Activated CD4-positive, alpha-beta T cell treated with anti-CD3 and anti-CD28 coated beads for 36 hours (primary cell): ENCODE measurements at regions of chr19 and their contacts with region 1.

Region 1: GRCh38 chr19:44770550-44771257 is 7.0 kb upstream of the CBLC start:
- DNase-seq: peak; percentile 99
- ATAC-seq: peak; percentile 100
- H3K4me3 Mint-ChIP-seq: peak overlapping the region; percentile 47
- H3K27ac Mint-ChIP-seq: peak overlapping the region; percentile 77
- H3K4me1 Mint-ChIP-seq: peaks cover 30% of the 10 kb centered on the region
- H3K27me3 Mint-ChIP-seq: no peaks in the 10 kb centered on the region

Region 2: DNA sequence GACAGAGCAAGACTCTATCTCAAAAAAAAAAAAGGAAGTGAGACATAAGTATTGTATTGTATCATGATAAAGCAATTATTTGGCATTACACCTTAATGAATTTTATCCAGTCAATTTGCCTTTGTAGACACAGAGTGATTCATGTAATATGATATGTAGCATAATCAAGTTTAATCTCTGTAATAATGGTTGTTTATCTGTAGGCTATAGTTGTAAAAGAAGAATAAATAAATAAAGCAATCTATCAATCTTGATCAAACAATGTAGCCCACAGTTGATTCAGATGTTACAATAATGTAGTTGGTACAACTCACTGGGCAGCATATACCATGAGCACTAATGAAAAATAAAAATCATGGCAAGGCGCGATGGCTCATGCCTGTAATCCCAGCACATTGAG is 212.8 kb before region 1 on chr19:
- CTCF ChIA-PET with region 1: no interaction called
- POLR2A ChIA-PET with region 1: no interaction called
- intact Hi-C with region 1: no loop called
- DNase-seq: no peak
- ATAC-seq: no peak
- H3K4me3 Mint-ChIP-seq: no peak overlapping the region
- H3K27ac Mint-ChIP-seq: no peak overlapping the region
- H3K4me1 Mint-ChIP-seq: no peaks in the 10 kb centered on the region
- H3K27me3 Mint-ChIP-seq: peaks cover 6% of the 10 kb centered on the region

Region 3: GRCh38 chr19:44653977-44654774 is 116.5 kb before region 1 on chr19:
- CTCF ChIA-PET with region 1: interaction called, 10 read pairs
- POLR2A ChIA-PET with region 1: no interaction called
- intact Hi-C with region 1: loop called in 1 of 2 experiments (anchors 1 kb)
- DNase-seq: peak; percentile 89
- ATAC-seq: peak; percentile 97
- H3K4me3 Mint-ChIP-seq: no peak overlapping the region
- H3K27ac Mint-ChIP-seq: no peak overlapping the region
- H3K4me1 Mint-ChIP-seq: peaks cover 11% of the 10 kb centered on the region
- H3K27me3 Mint-ChIP-seq: no peaks in the 10 kb centered on the region

Region 4: GRCh38 chr19:44718441-44719261 is 52.1 kb before region 1 on chr19:
- CTCF ChIA-PET with region 1: interaction called, 288 read pairs
- POLR2A ChIA-PET with region 1: interaction called, 20 read pairs
- intact Hi-C with region 1: no loop called
- DNase-seq: no peak
- ATAC-seq: no peak
- H3K4me3 Mint-ChIP-seq: no peak overlapping the region
- H3K27ac Mint-ChIP-seq: no peak overlapping the region
- H3K4me1 Mint-ChIP-seq: peaks cover 18% of the 10 kb centered on the region
- H3K27me3 Mint-ChIP-seq: peaks cover 4% of the 10 kb centered on the region

Region 5: DNA sequence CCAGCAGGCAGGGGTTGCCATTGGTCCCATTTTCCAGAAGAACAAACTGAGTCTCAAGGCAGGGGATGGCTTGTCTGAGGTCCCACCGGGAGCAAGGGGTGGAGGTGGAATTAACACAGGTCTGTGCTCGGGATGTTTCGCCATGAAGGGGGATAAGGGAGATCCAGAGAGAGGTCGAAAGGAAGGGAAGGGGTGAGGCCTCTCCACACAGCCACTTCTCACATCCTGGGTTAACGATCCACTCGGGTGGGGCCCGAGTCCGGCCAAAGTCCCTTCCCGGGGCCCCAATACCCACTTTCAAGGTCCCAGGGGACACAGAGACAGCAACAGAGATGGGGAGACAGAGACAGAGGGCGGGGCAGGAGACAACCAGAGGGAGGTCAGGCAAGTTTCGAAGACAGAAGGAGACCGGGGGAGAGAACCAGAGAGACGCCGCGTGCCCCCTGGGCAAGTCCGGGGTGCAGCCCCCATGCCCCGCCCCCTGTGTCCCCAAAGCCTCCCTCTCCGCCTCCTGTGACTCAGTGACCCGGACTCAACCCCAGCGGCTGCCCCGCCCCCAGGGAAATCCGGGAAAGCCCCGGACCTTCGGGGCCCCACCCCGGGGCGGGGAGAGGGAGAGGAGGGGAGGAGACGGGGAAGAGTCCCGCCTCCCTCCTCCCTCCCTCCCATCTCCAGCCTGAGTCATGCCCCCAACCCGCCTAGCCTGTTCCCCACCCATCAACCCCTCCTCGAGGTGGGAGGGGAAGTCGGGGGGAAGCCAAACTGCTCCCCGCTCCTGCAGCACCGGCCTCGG is 23.6 kb before region 1 on chr19:
- CTCF ChIA-PET with region 1: interaction called, 7 read pairs
- POLR2A ChIA-PET with region 1: interaction called, 3 read pairs
- intact Hi-C with region 1: loop called (anchors 1 kb)
- DNase-seq: peak; percentile 98
- ATAC-seq: peak; percentile 85
- H3K4me3 Mint-ChIP-seq: peak overlapping the region; percentile 91
- H3K27ac Mint-ChIP-seq: peak overlapping the region; percentile 95
- H3K4me1 Mint-ChIP-seq: peaks cover 43% of the 10 kb centered on the region
- H3K27me3 Mint-ChIP-seq: no peaks in the 10 kb centered on the region

Region 6: DNA sequence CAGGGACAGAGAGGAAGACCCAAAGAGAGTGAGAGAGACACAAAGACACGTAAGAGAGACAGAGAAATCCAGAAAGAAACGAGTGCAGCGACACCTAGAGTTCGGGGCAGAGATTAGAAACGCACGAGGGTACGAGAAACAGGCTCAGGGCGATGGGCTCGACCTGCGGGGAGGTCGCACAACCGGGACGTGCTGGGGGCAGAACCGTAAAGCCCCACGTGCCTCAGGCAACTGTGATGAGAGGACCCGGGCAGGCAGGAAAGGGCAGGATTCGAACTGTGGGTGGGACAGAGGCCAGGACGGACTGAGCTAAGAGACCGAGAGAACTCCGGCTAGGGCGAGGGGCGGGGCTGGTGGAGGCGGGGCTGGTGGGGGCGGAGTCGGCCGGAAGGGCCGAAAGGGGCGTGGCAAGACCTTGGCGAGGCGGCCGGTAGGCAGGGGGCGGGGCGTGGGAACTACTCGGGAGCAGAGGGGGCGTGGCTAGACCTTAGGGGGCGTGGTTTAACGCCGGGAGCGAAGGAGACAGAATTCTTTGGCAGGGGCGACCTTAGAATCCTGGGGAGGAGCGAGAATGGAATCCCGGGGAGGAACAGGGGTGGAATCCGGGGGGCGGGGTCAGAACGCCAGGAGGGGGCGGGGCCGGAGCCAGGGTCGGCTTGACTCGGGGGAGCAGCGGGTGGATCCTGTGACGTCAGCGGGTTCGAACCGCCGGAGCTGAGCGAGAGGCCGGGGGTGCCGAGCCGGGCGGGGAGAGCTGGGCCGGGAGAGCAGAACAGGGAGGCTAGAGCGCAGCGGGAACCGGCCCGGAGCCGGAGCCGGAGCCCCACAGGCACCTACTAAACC is 75.1 kb after region 1 on chr19 and contains the start of gene NECTIN2:
- CTCF ChIA-PET with region 1: interaction called, 8 read pairs
- POLR2A ChIA-PET with region 1: no interaction called
- intact Hi-C with region 1: loop called in 1 of 2 experiments (anchors 1 kb)
- DNase-seq: peak; percentile 98
- ATAC-seq: peak; percentile 77
- H3K4me3 Mint-ChIP-seq: peak within 1 kb of the TSS; percentile 73
- H3K27ac Mint-ChIP-seq: peak within 1 kb of the TSS; percentile 10
- H3K4me1 Mint-ChIP-seq: peaks cover 21% of the 10 kb centered on the region
- H3K27me3 Mint-ChIP-seq: peaks cover 21% of the 10 kb centered on the region
- total RNA-seq, gene NECTIN2: 0.80 to 0.93 TPM

Region 7: GRCh38 chr19:45059278-45059965 is 288.7 kb after region 1 on chr19:
- CTCF ChIA-PET with region 1: no interaction called
- POLR2A ChIA-PET with region 1: no interaction called
- intact Hi-C with region 1: no loop called
- DNase-seq: peak; percentile 91
- ATAC-seq: peak; percentile 93
- H3K4me3 Mint-ChIP-seq: no peak overlapping the region
- H3K27ac Mint-ChIP-seq: no peak overlapping the region
- H3K4me1 Mint-ChIP-seq: no peaks in the 10 kb centered on the region
- H3K27me3 Mint-ChIP-seq: no peaks in the 10 kb centered on the region

Region 8: DNA sequence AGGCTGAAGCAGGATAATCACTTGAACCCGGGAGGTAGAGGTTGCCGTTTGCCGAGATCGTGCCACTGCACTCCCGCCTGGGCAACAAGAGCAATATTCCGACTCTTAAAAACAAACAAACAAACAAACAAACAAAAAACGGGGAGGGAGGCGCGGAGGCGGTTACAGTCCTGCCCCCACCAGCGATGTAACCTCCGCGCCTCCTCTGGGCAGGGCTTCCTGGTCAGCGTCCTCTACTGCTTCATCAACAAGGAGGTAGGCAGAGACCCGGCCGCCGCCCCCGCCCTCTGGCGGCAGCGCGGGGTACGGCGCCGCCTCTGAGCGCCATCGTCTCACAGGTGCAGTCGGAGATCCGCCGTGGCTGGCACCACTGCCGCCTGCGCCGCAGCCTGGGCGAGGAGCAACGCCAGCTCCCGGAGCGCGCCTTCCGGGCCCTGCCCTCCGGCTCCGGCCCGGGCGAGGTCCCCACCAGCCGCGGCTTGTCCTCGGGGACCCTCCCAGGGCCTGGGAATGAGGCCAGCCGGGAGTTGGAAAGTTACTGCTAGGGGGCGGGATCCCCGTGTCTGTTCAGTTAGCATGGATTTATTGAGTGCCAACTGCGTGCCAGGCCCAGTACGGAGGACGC is 910.8 kb after region 1 on chr19:
- CTCF ChIA-PET with region 1: no interaction called
- POLR2A ChIA-PET with region 1: no interaction called
- intact Hi-C with region 1: no loop called
- DNase-seq: peak; percentile 92
- ATAC-seq: peak; percentile 84
- H3K4me3 Mint-ChIP-seq: peak overlapping the region; percentile 64
- H3K27ac Mint-ChIP-seq: peak overlapping the region; percentile 77
- H3K4me1 Mint-ChIP-seq: peaks cover 19% of the 10 kb centered on the region
- H3K27me3 Mint-ChIP-seq: no peaks in the 10 kb centered on the region